ENCODE measurements at regions of chr16 and their contacts with region 1.

Region 1: GRCh38 chr16:29729116-29729521 is 16.7 kb downstream of the C16orf54 start:
- DNase-seq: no peak
- H3K4me3 ChIP-seq: no peak overlapping the region
- H3K4me3 Mint-ChIP-seq: peak overlapping the region in 1 of 8 donors; percentile 20
- H3K27ac ChIP-seq: no peak overlapping the region
- H3K27ac Mint-ChIP-seq: peak overlapping the region in 3 of 7 donors; percentile 24 to 66 (median 36)
- H3K4me1 ChIP-seq: peaks cover 14% of the 10 kb centered on the region
- H3K4me1 Mint-ChIP-seq: peaks cover 17 to 32% (median 21%) of the 10 kb centered on the region in 4 donors
- H3K27me3 ChIP-seq: no peaks in the 10 kb centered on the region
- H3K27me3 Mint-ChIP-seq: no peaks in the 10 kb centered on the region

Region 2: DNA sequence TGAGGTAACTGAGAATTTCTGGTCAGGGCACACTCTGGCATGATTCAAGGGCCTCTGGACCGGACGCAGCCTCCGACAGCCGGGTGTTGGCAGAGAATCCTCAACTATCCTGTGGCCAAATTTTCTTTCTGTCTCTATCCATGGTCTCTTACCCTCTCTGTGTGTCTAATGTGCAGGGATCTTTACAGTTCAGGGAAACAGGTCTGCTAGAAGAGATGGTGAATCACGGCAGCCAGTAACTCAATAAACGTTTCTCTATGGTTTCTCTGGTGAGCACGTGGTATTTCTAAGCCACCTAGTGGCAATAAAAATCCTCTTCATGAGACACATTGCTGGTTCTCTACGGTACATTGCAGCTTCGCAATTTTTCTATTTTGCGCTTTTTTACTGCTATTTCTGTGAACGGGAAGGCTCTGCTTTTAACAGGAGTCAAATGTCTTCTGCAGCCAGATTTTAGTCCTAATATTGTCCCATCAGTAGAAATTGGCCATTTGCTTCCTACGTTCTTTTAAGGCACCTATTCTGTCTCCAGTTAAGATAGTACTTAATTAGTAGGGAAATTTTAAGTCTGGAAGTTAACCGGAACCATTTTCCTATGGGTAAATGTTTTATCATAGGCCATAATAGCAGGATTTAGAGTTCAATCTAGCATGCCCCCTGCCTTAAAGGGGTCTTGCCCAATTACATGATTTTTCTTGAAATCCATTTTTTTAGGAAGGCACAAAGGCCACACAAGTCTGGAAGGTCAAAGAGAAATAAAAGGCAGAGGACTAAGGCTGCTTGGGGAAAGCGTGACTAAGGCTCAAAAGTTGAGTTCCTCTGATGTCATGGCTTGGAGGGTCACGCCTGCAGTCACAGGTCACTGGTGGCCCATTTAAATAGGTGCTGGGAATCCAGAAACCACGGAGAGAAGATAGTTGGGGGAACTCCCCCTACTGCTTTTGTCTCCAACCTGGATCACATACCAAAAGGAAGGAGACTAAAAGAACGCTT is 18.6 kb before region 1 on chr16:
- CTCF ChIA-PET with region 1: interaction called, 25 read pairs
- POLR2A ChIA-PET with region 1: no interaction called
- intact Hi-C with region 1: no loop called
- DNase-seq: peak; percentile 64 to 73 (median 69)
- H3K4me3 ChIP-seq: no peak overlapping the region
- H3K4me3 Mint-ChIP-seq: peak overlapping the region in 1 of 8 donors; percentile 12
- H3K27ac ChIP-seq: no peak overlapping the region
- H3K27ac Mint-ChIP-seq: peak overlapping the region in 6 of 7 donors; percentile 8 to 95 (median 89)
- H3K4me1 ChIP-seq: peaks cover 10% of the 10 kb centered on the region
- H3K4me1 Mint-ChIP-seq: peaks cover 6 to 25% (median 12%) of the 10 kb centered on the region in 4 donors
- H3K27me3 ChIP-seq: no peaks in the 10 kb centered on the region
- H3K27me3 Mint-ChIP-seq: no peaks in the 10 kb centered on the region

Region 3: GRCh38 chr16:29757950-29758466 is 28.9 kb after region 1 on chr16:
- CTCF ChIA-PET with region 1: interaction called, 18 read pairs
- POLR2A ChIA-PET with region 1: interaction called, 5 read pairs
- intact Hi-C with region 1: no loop called
- DNase-seq: no peak
- H3K4me3 ChIP-seq: no peak overlapping the region
- H3K4me3 Mint-ChIP-seq: no peak overlapping the region
- H3K27ac ChIP-seq: no peak overlapping the region
- H3K27ac Mint-ChIP-seq: peak overlapping the region in 3 of 7 donors; percentile 6 to 75 (median 46)
- H3K4me1 ChIP-seq: peaks cover 23% of the 10 kb centered on the region
- H3K4me1 Mint-ChIP-seq: peaks cover 19 to 43% (median 27%) of the 10 kb centered on the region in 4 donors
- H3K27me3 ChIP-seq: no peaks in the 10 kb centered on the region
- H3K27me3 Mint-ChIP-seq: no peaks in the 10 kb centered on the region